CD4-positive, alpha-beta T cell (primary cell): ENCODE measurements at regions of chr10 and their contacts with region 1.

Region 1: GRCh38 chr10:110225756-110226542 is 18.5 kb downstream of the MXI1 start:
- DNase-seq: peak; percentile 78 to 96 (median 87)
- ATAC-seq: peak; percentile 49
- H3K4me3 ChIP-seq: peak overlapping the region; percentile 81
- H3K4me3 Mint-ChIP-seq: peak overlapping the region; percentile 99
- H3K27ac ChIP-seq: peak overlapping the region; percentile 75 to 84
- H3K27ac Mint-ChIP-seq: peak overlapping the region; percentile 96
- H3K4me1 ChIP-seq: peaks cover 32% of the 10 kb centered on the region
- H3K4me1 Mint-ChIP-seq: peaks cover 38% of the 10 kb centered on the region
- H3K27me3 ChIP-seq: no peaks in the 10 kb centered on the region
- H3K27me3 Mint-ChIP-seq: no peaks in the 10 kb centered on the region
- CTCF ChIP-seq: peak; percentile 55

Region 2: GRCh38 chr10:109047856-109048255 is 1178.1 kb before region 1 on chr10:
- CTCF ChIA-PET with region 1: no interaction called
- POLR2A ChIA-PET with region 1: no interaction called
- intact Hi-C with region 1: no loop called
- DNase-seq: no peak
- ATAC-seq: no peak
- H3K4me3 ChIP-seq: no peak overlapping the region
- H3K4me3 Mint-ChIP-seq: no peak overlapping the region
- H3K27ac ChIP-seq: no peak overlapping the region
- H3K27ac Mint-ChIP-seq: no peak overlapping the region
- H3K4me1 ChIP-seq: no peaks in the 10 kb centered on the region
- H3K4me1 Mint-ChIP-seq: no peaks in the 10 kb centered on the region
- H3K27me3 ChIP-seq: no peaks in the 10 kb centered on the region
- H3K27me3 Mint-ChIP-seq: no peaks in the 10 kb centered on the region
- CTCF ChIP-seq: no peak

Region 3: GRCh38 chr10:109883859-109884771 is 341.8 kb before region 1 on chr10:
- CTCF ChIA-PET with region 1: no interaction called
- POLR2A ChIA-PET with region 1: no interaction called
- intact Hi-C with region 1: loop called in 1 of 2 experiments (anchors 5 kb)
- DNase-seq: peak; percentile 41 to 82 (median 52)
- ATAC-seq: peak; percentile 88
- H3K4me3 ChIP-seq: no peak overlapping the region
- H3K4me3 Mint-ChIP-seq: no peak overlapping the region
- H3K27ac ChIP-seq: no peak overlapping the region
- H3K27ac Mint-ChIP-seq: no peak overlapping the region
- H3K4me1 ChIP-seq: peaks cover 5% of the 10 kb centered on the region
- H3K4me1 Mint-ChIP-seq: peaks cover 6% of the 10 kb centered on the region
- H3K27me3 ChIP-seq: no peaks in the 10 kb centered on the region
- H3K27me3 Mint-ChIP-seq: no peaks in the 10 kb centered on the region
- CTCF ChIP-seq: peak; percentile 98

Region 4: GRCh38 chr10:109922976-109923921 is 302.7 kb before region 1 on chr10 and contains the start of gene XPNPEP1:
- CTCF ChIA-PET with region 1: no interaction called
- POLR2A ChIA-PET with region 1: no interaction called
- intact Hi-C with region 1: loop called (anchors 5 to 10 kb)
- DNase-seq: peak; percentile 48 to 94 (median 68)
- ATAC-seq: peak; percentile 88
- H3K4me3 ChIP-seq: peak within 1 kb of the TSS; percentile 87
- H3K4me3 Mint-ChIP-seq: peak within 1 kb of the TSS; percentile 91
- H3K27ac ChIP-seq: peak within 1 kb of the TSS; percentile 63 to 83
- H3K27ac Mint-ChIP-seq: peak within 1 kb of the TSS; percentile 93
- H3K4me1 ChIP-seq: peaks cover 39% of the 10 kb centered on the region
- H3K4me1 Mint-ChIP-seq: peaks cover 53% of the 10 kb centered on the region
- H3K27me3 ChIP-seq: no peaks in the 10 kb centered on the region
- H3K27me3 Mint-ChIP-seq: no peaks in the 10 kb centered on the region
- CTCF ChIP-seq: no peak
- total RNA-seq, gene XPNPEP1: 50.3 to 54.3 TPM

Region 5: DNA sequence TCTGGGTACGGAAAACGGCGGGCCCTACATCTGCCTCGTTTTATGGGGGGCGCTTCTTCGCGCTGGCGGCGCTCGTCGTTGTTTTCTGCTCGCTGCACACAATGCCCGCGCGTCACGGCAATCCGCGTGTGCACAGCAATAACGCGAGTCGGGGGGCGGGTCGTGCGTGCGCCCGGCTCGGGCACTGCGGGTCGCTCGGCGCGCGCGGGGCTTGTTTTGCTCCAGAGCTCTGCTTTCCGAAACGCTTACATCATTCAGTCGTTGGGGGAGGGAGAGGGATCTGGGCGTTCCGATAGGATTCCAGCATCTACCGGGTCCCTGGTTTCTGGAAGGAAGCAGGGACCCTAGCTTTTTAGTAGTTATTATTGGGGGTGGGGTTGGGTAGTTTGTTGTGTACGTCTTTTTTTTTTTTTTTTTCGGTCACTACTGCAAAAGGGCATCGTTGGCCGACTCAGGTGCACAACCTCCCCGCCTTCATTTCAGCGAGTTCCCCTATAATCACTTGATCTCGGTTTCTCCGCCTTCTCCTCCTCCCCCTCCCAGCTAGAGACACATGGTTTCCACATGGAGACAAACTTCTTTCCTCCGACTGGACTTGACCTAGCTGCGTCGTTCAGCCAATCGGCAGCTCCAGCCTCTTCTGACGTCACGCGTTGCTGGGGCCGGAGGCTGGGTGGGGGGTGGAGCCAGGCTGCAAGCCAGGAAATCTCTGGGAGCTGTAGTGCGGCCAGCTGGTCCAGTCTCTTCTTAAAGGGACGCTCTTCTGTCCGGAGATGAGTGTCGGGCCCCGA is 15.1 kb before region 1 on chr10:
- CTCF ChIA-PET with region 1: interaction called, 118 read pairs
- POLR2A ChIA-PET with region 1: interaction called, 386 read pairs
- intact Hi-C with region 1: loop called (anchors 1 kb)
- DNase-seq: peak; percentile 84 to 96 (median 87)
- ATAC-seq: peak; percentile 41
- H3K4me3 ChIP-seq: peak overlapping the region; percentile 94
- H3K4me3 Mint-ChIP-seq: peak overlapping the region; percentile 99
- H3K27ac ChIP-seq: peak overlapping the region; percentile 85 to 98
- H3K27ac Mint-ChIP-seq: peak overlapping the region; percentile 100
- H3K4me1 ChIP-seq: peaks cover 76% of the 10 kb centered on the region
- H3K4me1 Mint-ChIP-seq: peaks cover 58% of the 10 kb centered on the region
- H3K27me3 ChIP-seq: no peaks in the 10 kb centered on the region
- H3K27me3 Mint-ChIP-seq: peaks cover 5% of the 10 kb centered on the region
- CTCF ChIP-seq: no peak

Region 6: GRCh38 chr10:110304780-110305421 is 79.0 kb after region 1 on chr10 and contains the start of gene SMNDC1:
- CTCF ChIA-PET with region 1: interaction called, 8 read pairs
- POLR2A ChIA-PET with region 1: interaction called, 4 read pairs
- intact Hi-C with region 1: loop called in 1 of 2 experiments (anchors 2 kb)
- DNase-seq: peak; percentile 94 to 99 (median 96)
- ATAC-seq: peak; percentile 88
- H3K4me3 ChIP-seq: peak within 1 kb of the TSS; percentile 72
- H3K4me3 Mint-ChIP-seq: peak within 1 kb of the TSS; percentile 97
- H3K27ac ChIP-seq: peak within 1 kb of the TSS; percentile 74 to 90
- H3K27ac Mint-ChIP-seq: peak within 1 kb of the TSS; percentile 98
- H3K4me1 ChIP-seq: peaks cover 23% of the 10 kb centered on the region
- H3K4me1 Mint-ChIP-seq: peaks cover 61% of the 10 kb centered on the region
- H3K27me3 ChIP-seq: no peaks in the 10 kb centered on the region
- H3K27me3 Mint-ChIP-seq: no peaks in the 10 kb centered on the region
- CTCF ChIP-seq: no peak
- total RNA-seq, gene SMNDC1: 40.2 to 48.1 TPM

Region 7: DNA sequence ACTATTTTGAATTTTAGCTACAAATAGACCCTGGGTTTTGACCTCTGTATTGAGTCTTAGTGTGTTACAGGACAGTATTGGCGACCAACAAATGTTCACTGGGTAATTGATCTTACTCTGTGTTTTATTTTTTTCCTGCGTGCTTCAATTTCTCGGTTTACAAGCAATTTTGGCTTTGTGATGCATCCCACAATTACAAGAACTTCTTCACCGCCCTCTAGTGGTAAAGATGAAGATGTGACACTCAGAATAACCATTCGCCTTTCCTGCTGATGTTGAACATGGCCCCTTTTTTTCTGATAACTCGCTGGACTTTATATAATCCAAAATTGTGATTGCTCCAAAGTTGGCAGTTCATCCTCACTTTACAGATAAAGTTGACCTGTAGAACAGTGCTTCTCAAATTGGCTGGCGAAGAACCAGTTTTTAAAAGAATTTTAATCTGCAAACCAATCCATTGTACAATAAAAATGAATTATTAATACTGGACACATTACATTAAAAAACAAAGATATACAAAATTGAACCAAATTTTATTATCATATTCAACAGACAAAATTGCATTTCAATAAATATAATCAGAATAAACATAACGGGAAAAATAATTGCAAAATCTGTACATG is 321.3 kb after region 1 on chr10:
- CTCF ChIA-PET with region 1: no interaction called
- POLR2A ChIA-PET with region 1: no interaction called
- intact Hi-C with region 1: loop called in 1 of 2 experiments (anchors 10 kb)
- DNase-seq: peak in 3 of 14 experiments; percentile 77 to 79 (median 78)
- ATAC-seq: peak; percentile 80
- H3K4me3 ChIP-seq: no peak overlapping the region
- H3K4me3 Mint-ChIP-seq: no peak overlapping the region
- H3K27ac ChIP-seq: no peak overlapping the region
- H3K27ac Mint-ChIP-seq: no peak overlapping the region
- H3K4me1 ChIP-seq: no peaks in the 10 kb centered on the region
- H3K4me1 Mint-ChIP-seq: peaks cover 6% of the 10 kb centered on the region
- H3K27me3 ChIP-seq: peaks cover 0 to 10% of the 10 kb centered on the region in 2 experiments
- H3K27me3 Mint-ChIP-seq: peaks cover 21% of the 10 kb centered on the region
- CTCF ChIP-seq: peak; percentile 92

Region 8: DNA sequence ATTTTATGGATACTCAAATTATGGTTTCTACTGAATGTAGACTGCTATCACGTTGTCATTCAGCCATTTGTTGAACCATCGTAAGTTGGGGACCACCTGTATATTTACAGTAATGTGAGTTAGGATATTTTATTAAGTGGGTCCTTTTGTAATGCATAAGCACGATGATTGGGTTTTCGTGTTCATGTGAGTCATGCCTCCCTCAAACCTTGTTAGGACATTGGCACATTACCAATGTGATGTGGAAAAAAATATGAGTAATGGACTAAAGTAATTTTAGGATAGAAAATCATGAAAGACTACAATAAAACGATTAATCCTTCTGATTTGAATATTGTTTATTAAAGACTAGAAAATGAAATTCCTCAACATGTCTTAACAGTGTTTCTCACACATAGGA is 350.3 kb after region 1 on chr10:
- CTCF ChIA-PET with region 1: no interaction called
- POLR2A ChIA-PET with region 1: no interaction called
- intact Hi-C with region 1: no loop called
- DNase-seq: no peak
- ATAC-seq: no peak
- H3K4me3 ChIP-seq: no peak overlapping the region
- H3K4me3 Mint-ChIP-seq: no peak overlapping the region
- H3K27ac ChIP-seq: no peak overlapping the region
- H3K27ac Mint-ChIP-seq: no peak overlapping the region
- H3K4me1 ChIP-seq: peaks cover 3% of the 10 kb centered on the region
- H3K4me1 Mint-ChIP-seq: peaks cover 44% of the 10 kb centered on the region
- H3K27me3 ChIP-seq: no peaks in the 10 kb centered on the region
- H3K27me3 Mint-ChIP-seq: no peaks in the 10 kb centered on the region
- CTCF ChIP-seq: no peak

Region 9: DNA sequence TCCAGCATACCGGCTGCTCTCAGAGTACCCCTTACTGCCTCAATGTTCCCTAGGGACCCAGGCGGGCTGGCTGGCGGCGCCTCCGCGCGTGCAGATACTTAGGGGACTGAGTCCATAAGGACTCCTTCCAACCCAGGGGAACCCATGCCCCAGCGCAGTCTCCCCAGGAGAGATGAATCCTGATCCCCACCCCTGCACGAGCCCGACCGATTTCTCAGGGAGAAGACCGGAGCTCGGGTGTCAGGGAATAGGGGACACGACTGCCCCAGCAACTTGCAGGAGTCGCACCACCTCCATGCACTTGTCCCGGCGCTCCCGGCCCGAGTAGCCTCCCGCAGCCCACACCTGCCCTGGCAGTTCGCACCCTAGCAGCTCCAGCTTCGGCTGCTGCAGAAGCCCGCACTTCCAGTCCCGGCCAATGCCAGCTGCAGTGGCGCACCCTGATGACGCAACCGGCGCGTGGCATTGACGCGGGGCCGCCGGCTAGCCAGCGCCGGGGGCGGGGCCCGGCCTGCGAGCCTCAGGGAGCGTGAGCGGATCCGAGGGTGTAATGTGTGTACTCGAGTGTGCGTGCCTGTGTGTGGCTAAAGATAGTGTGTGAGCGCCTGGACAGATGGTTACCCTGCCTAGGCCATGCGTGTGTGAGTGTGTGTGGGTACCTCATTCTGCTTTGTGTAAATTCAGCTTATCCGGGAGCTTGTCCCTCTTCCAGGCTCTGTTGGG is 1957.5 kb after region 1 on chr10 and contains the start of gene GPAM:
- CTCF ChIA-PET with region 1: no interaction called
- POLR2A ChIA-PET with region 1: no interaction called
- intact Hi-C with region 1: loop called in 1 of 2 experiments (anchors 10 kb)
- DNase-seq: peak; percentile 93 to 100 (median 98)
- ATAC-seq: peak; percentile 96
- H3K4me3 ChIP-seq: peak within 1 kb of the TSS; percentile 70
- H3K4me3 Mint-ChIP-seq: peak within 1 kb of the TSS; percentile 95
- H3K27ac ChIP-seq: peak within 1 kb of the TSS; percentile 30 to 65
- H3K27ac Mint-ChIP-seq: peak within 1 kb of the TSS; percentile 95
- H3K4me1 ChIP-seq: peaks cover 12% of the 10 kb centered on the region
- H3K4me1 Mint-ChIP-seq: peaks cover 38% of the 10 kb centered on the region
- H3K27me3 ChIP-seq: no peaks in the 10 kb centered on the region
- H3K27me3 Mint-ChIP-seq: peaks cover 9% of the 10 kb centered on the region
- CTCF ChIP-seq: no peak
- total RNA-seq, gene GPAM: 4.8 to 6.7 TPM